GM18951 (cell line): ENCODE measurements at regions of chrX and their contacts with region 1.

Region 1: GRCh38 chrX:56268888-56269287 is 36.7 kb downstream of the KLF8 start:
- POLR2A ChIP-seq: no peak

Region 2: DNA sequence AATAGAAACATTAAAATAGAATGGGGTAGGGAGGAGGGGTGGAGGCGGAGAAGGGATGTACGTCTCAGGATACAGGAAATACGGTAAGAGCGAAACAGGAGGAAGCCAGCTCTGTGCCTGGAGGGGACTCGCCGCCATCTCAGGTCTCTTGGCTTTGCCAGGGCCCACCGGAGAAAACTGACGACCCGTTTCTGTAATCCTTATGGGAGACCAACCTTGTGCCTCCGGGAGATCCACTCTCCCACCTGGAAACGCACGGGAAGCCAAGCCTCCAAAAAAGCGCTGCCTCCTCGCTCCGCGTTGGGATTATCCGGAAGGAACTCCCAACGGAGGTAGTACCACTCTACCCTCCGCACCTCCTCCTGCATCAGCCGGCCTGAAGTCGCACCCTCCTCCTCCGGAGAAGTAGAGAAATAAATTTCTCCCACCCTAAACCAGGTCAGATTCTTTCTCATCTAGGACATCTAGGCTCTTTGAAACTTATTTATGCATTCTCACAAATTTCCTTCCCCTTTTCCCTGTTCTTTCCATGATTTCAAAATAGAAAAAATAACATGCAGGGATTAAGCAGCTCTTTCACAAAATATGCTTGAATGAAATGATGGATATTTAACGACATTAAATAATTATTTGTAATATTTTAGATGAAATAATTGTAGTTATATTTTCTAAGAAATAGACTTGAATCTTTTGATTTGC is 460.4 kb after region 1 on chrX and contains the start of gene NBDY:
- in situ Hi-C with region 1: loop called (anchors 25 kb)
- POLR2A ChIP-seq: peak; percentile 58